Activated T-helper 2 cell treated with anti-CD3 and anti-CD28 coated beads, Interferon-gamma antibody, Interleukin-2, Interleukin-4, amounts not matched to agents 10 μg/mL and 5 μg/mL and 100 μg/mL, durations not matched to agents 14 hours and 24 hours and 36 hours (primary cell): ENCODE measurements at regions of chr4 and their contacts with region 1.

Region 1: DNA sequence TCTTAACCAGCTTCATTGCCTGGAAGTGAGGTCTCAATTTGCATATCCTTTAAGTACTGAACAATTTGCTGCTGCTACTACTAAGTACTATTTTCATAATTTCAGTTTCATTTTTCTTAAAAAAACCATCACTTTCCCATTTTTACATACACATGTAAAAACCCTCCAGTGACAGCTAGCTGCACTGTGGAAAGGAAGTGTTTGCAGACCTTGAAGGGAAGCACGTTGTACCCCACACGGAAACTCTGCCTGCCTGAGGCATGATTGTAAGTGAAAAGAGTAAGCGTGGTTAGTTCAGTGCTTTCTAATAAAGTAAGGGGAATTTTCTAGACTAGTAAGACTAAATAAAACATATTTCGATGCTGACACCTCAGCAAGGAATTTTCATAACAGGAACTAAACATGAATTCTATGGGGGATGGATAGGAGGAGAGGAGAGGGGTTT is 103.6 kb downstream of the RAPGEF2 start:
- DNase-seq: peak; percentile 21
- H3K4me3 Mint-ChIP-seq: peak overlapping the region; percentile 44
- H3K27ac Mint-ChIP-seq: peak overlapping the region; percentile 80
- H3K4me1 Mint-ChIP-seq: peaks cover 41% of the 10 kb centered on the region
- H3K27me3 Mint-ChIP-seq: no peaks in the 10 kb centered on the region

Region 2: GRCh38 chr4:158253350-158253980 is 953.0 kb before region 1 on chr4:
- intact Hi-C with region 1: loop called (anchors 2 kb)
- DNase-seq: peak; percentile 11
- H3K4me3 Mint-ChIP-seq: no peak overlapping the region
- H3K27ac Mint-ChIP-seq: no peak overlapping the region
- H3K4me1 Mint-ChIP-seq: peaks cover 4% of the 10 kb centered on the region
- H3K27me3 Mint-ChIP-seq: peaks cover 1% of the 10 kb centered on the region

Region 3: GRCh38 chr4:158671915-158672806 is 534.3 kb before region 1 on chr4 and contains the start of gene ETFDH:
- intact Hi-C with region 1: loop called (anchors 1 kb)
- DNase-seq: peak; percentile 98
- H3K4me3 Mint-ChIP-seq: peak within 1 kb of the TSS; percentile 98
- H3K27ac Mint-ChIP-seq: peak within 1 kb of the TSS; percentile 95
- H3K4me1 Mint-ChIP-seq: peaks cover 25% of the 10 kb centered on the region
- H3K27me3 Mint-ChIP-seq: no peaks in the 10 kb centered on the region
- total RNA-seq, gene ETFDH: 21.6 and 23.8 TPM in 2 replicates

Region 4: GRCh38 chr4:158768555-158769174 is 437.8 kb before region 1 on chr4 and contains the start of gene FNIP2:
- intact Hi-C with region 1: loop called (anchors 2 kb)
- DNase-seq: peak; percentile 65
- H3K4me3 Mint-ChIP-seq: peak within 1 kb of the TSS; percentile 100
- H3K27ac Mint-ChIP-seq: peak within 1 kb of the TSS; percentile 96
- H3K4me1 Mint-ChIP-seq: peaks cover 43% of the 10 kb centered on the region
- H3K27me3 Mint-ChIP-seq: peaks cover 8% of the 10 kb centered on the region
- total RNA-seq, gene FNIP2: 10.5 and 11.9 TPM in 2 replicates

Region 5: GRCh38 chr4:159102622-159103383 is 103.6 kb before region 1 on chr4 and contains the start of gene RAPGEF2:
- intact Hi-C with region 1: loop called (anchors 5 kb)
- DNase-seq: peak; percentile 84
- H3K4me3 Mint-ChIP-seq: peak within 1 kb of the TSS; percentile 82
- H3K27ac Mint-ChIP-seq: peak within 1 kb of the TSS; percentile 78
- H3K4me1 Mint-ChIP-seq: peaks cover 53% of the 10 kb centered on the region
- H3K27me3 Mint-ChIP-seq: peaks cover 21% of the 10 kb centered on the region
- total RNA-seq, gene RAPGEF2: 17.0 TPM in 2 replicates

Region 6: DNA sequence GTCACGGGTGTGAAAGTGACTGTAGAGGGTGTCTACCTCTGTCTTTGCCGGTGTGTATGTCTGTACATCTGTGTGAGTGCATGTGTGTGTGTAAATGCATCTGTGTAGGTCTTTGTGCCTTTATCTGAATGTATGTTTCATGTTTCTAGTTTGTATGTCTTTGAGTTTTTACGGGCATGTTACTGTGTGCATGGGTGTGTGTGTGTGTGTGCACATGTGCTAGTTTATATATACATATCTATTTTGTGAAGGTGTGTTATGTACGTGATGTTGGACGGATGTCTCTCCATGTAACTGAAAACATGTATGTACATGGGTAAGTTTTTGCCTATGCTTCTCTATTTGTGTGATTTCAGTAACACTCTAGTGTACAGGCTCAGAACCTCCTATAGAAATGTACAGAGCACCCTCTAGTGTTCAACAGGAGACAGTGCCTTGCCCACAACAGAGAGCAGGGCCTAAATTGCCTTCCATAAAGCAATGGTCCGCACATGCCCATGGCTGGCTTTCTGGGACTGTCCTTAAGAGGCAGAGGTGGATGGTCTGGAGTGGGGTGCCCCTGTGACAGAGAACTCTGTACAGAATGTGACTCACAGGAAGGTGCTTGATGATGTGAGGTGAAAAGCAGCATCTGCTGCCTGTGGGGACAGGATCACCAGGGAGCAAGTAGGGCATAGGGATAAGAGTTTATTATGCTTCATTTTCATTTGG is 240.0 kb after region 1 on chr4:
- intact Hi-C with region 1: loop called (anchors 10 kb)
- DNase-seq: peak; percentile 11
- H3K4me3 Mint-ChIP-seq: no peak overlapping the region
- H3K27ac Mint-ChIP-seq: no peak overlapping the region
- H3K4me1 Mint-ChIP-seq: no peaks in the 10 kb centered on the region
- H3K27me3 Mint-ChIP-seq: peaks cover 7% of the 10 kb centered on the region